Activated CD4-positive, alpha-beta T cell treated with anti-CD3 and anti-CD28 coated beads for 36 hours (primary cell): ENCODE measurements at regions of chr2 and their contacts with region 1.

Region 1: DNA sequence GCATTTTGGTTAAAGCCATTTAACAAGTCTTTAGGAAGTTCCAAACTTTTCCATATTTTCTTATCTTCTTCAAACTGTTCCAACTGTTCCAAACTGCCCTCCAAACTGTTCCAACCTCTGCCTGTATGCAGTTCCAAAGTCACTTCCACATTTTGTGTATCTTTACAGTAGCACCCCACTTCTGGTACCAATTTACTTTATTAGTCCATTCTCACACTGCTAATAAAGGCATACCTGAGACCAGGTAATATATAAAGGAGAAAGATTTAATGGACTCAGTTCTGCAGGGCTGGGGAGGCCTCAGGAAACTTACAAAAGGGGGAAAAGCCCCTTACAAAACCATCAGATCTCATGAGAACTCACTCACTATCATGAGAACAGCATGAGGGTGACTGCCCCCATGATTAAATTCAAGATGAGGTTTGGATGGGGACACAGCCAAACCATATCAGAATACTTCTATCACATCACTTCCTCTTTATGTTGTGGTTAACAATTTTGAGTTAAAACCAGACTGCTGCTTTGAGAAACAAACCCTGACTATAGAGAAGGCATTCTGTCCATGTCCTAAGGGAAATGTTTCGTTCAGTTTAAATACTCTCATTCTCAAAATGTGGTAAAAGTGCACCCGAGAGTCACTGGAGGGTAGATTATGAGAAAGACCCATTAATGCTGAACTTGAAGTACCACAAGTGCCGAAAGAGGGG is 11.0 kb downstream of the IL18R1 start:
- DNase-seq: peak; percentile 35
- ATAC-seq: peak; percentile 54
- H3K4me3 Mint-ChIP-seq: peak overlapping the region; percentile 55
- H3K27ac Mint-ChIP-seq: peak overlapping the region; percentile 93
- H3K4me1 Mint-ChIP-seq: peaks cover 73% of the 10 kb centered on the region
- H3K27me3 Mint-ChIP-seq: no peaks in the 10 kb centered on the region

Region 2: GRCh38 chr2:101900375-101900774 is 466.2 kb before region 1 on chr2:
- CTCF ChIA-PET with region 1: interaction called, 4 read pairs
- POLR2A ChIA-PET with region 1: no interaction called
- intact Hi-C with region 1: loop called in 1 of 2 experiments (anchors 1 kb)
- DNase-seq: peak; percentile 82
- ATAC-seq: peak; percentile 93
- H3K4me3 Mint-ChIP-seq: peak overlapping the region; percentile 24
- H3K27ac Mint-ChIP-seq: peak overlapping the region; percentile 90
- H3K4me1 Mint-ChIP-seq: peaks cover 38% of the 10 kb centered on the region
- H3K27me3 Mint-ChIP-seq: peaks cover 10% of the 10 kb centered on the region

Region 3: DNA sequence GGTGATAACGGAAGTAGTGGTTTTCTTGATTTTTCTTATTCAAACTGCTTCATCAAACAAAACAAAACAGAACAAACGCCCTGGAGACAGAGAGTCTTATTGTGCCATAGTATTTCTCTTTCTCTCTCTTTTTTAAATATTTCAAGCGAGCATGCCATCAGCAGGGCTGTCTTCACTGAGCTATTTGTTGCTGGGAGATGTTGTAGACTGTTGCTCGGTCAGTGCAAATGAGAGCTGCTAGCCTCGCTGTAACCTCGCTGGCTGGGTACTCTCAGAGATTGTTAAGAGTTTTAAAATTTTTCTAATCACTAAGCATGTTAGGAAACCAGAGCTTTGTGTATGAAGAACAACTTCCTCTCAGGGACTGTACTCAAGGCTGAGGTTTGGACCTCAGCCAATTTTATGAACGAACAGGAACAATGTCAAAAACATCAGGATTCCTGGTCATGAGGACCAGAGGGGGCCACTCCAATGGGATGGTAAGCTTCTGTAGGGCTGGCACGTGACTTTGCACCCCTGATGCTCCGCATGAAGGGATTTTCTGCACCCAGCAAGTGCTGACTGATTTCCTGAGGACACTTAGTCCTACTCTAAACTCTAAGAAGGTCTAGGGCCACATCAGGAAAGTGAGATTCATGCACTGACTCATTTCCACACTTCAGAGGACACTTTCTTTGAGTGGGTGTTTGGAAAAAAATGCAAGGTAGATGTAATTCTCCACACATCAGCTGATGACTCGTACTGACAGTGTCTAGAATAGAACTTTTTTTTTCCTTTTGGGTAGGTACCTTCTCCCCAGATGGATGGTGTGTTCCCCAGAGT is 283.8 kb before region 1 on chr2:
- CTCF ChIA-PET with region 1: interaction called, 5 read pairs
- POLR2A ChIA-PET with region 1: no interaction called
- intact Hi-C with region 1: loop called (anchors 1 to 10 kb)
- DNase-seq: peak; percentile 74
- ATAC-seq: peak; percentile 90
- H3K4me3 Mint-ChIP-seq: peak overlapping the region; percentile 50
- H3K27ac Mint-ChIP-seq: peak overlapping the region; percentile 93
- H3K4me1 Mint-ChIP-seq: peaks cover 74% of the 10 kb centered on the region
- H3K27me3 Mint-ChIP-seq: no peaks in the 10 kb centered on the region

Region 4: GRCh38 chr2:102258386-102259074 is 108.0 kb before region 1 on chr2:
- CTCF ChIA-PET with region 1: no interaction called
- POLR2A ChIA-PET with region 1: no interaction called
- intact Hi-C with region 1: loop called (anchors 1 kb)
- DNase-seq: peak; percentile 63
- ATAC-seq: peak; percentile 92
- H3K4me3 Mint-ChIP-seq: peak overlapping the region; percentile 26
- H3K27ac Mint-ChIP-seq: peak overlapping the region; percentile 97
- H3K4me1 Mint-ChIP-seq: peaks cover 45% of the 10 kb centered on the region
- H3K27me3 Mint-ChIP-seq: no peaks in the 10 kb centered on the region

Region 5: DNA sequence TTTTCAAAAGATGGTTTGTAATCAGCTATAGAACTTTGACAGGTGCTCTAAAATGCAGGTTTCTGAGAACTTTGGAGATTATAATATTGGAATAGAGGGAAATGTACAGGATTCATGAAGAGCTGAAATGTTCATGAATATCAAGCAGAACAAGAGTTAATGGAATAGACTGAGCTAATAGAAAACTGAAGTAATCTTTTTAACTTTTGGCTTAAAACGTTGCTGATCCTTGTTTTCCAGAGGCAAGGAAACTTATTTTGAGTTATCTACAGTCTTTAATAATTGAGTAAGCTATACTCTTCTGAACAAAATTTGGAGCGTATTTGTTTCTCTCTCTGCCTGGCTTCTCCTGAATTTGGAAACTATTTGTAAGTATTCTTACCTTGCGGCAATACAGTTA is 45.6 kb after region 1 on chr2:
- CTCF ChIA-PET with region 1: interaction called, 3 read pairs
- POLR2A ChIA-PET with region 1: no interaction called
- intact Hi-C with region 1: loop called in 1 of 2 experiments (anchors 2 kb)
- DNase-seq: no peak
- ATAC-seq: no peak
- H3K4me3 Mint-ChIP-seq: no peak overlapping the region
- H3K27ac Mint-ChIP-seq: no peak overlapping the region
- H3K4me1 Mint-ChIP-seq: peaks cover 15% of the 10 kb centered on the region
- H3K27me3 Mint-ChIP-seq: no peaks in the 10 kb centered on the region